Panc1 (cell line): ENCODE measurements at regions of chr6 and their contacts with region 1.

Region 1: DNA sequence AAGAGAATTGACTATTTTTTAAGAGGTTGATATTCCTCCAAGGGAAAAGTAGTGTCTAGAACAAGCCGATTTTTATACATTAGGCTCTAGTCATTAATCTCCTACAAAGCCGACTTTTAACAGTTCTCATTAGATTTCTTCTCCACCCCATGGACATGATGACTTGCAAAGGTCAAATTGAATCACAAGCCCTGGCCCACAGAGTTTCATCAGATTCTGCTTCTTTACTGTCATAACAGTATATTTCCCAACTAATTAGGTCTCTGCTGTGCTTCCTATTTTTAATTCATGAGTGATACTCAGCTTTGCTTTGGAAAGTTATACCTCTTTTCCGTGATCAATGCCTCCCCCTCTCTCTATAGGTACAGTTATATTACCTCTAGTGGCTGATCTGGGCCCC is 90.6 kb upstream of the ADGRB3 start:
- DNase-seq: no peak
- ATAC-seq: no peak
- H3K4me3 ChIP-seq: no peak overlapping the region
- H3K27ac ChIP-seq: no peak overlapping the region
- H3K4me1 ChIP-seq: no peaks in the 10 kb centered on the region
- H3K27me3 ChIP-seq: no peaks in the 10 kb centered on the region
- CTCF ChIP-seq: no peak

Region 2: DNA sequence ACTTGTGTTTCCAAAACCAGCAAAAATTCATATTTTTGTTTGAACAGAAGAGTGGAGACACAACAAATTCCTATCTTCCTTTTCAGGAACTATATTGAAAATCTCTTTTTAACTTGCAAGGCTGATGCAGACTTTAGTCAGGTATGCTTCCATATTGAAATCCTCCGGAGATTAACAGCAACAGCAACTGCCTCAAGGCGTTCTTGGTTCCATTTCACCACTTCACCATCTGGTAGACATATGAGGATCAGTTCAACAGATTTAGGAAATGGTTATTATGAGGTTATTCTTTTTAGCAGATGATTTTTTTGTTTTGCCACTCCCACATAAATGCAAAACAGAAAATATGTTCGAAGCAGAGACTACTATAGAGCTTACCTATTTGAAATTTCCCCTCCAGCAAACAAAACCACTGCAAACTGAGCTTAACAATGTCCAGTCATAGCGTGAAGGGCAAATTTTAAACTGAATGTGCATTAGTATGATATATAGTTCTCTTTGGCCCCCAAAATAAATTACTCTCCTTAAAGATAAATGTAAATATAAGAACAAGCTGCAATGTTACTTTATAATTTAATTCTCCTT is 429.9 kb before region 1 on chr6:
- CTCF ChIA-PET with region 1: no interaction called
- POLR2A ChIA-PET with region 1: interaction called, 11 read pairs
- in situ Hi-C with region 1: no loop called
- intact Hi-C with region 1: no loop called
- DNase-seq: no peak
- ATAC-seq: no peak
- H3K4me3 ChIP-seq: no peak overlapping the region
- H3K27ac ChIP-seq: no peak overlapping the region
- H3K4me1 ChIP-seq: no peaks in the 10 kb centered on the region
- H3K27me3 ChIP-seq: no peaks in the 10 kb centered on the region
- CTCF ChIP-seq: no peak

Region 3: DNA sequence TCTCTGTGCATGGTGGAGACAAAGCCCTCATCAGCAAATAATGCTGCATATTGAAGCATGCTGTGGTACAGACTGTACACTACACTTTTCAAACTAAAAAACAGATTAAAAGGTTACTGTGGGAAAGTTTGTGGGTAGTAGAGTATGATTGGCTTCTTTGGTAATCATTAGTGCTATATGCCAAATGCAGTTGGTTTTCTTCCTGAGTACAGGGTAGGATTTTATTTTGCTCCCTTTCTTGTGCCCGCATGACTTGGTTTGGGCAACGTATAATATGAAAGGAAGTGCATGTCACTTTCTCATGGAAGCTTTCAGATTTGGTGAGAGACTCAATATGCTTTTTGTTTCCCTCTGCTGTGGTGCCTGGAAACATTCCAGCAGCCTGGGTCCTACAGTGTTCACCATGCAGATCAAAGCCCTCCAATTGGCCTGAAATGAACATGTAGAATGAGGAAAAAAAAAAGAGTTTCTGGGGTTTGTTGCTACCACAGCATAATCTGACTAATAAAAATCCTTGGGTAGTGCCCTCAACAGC is 180.1 kb before region 1 on chr6:
- CTCF ChIA-PET with region 1: no interaction called
- POLR2A ChIA-PET with region 1: no interaction called
- in situ Hi-C with region 1: no loop called
- intact Hi-C with region 1: no loop called
- DNase-seq: no peak
- ATAC-seq: no peak
- H3K4me3 ChIP-seq: no peak overlapping the region
- H3K27ac ChIP-seq: no peak overlapping the region
- H3K4me1 ChIP-seq: no peaks in the 10 kb centered on the region
- H3K27me3 ChIP-seq: no peaks in the 10 kb centered on the region
- CTCF ChIP-seq: no peak

Region 4: GRCh38 chr6:68476611-68477010 is 67.8 kb before region 1 on chr6:
- CTCF ChIA-PET with region 1: no interaction called
- POLR2A ChIA-PET with region 1: no interaction called
- in situ Hi-C with region 1: no loop called
- intact Hi-C with region 1: no loop called
- DNase-seq: no peak
- ATAC-seq: no peak
- H3K4me3 ChIP-seq: no peak overlapping the region
- H3K27ac ChIP-seq: no peak overlapping the region
- H3K4me1 ChIP-seq: no peaks in the 10 kb centered on the region
- H3K27me3 ChIP-seq: no peaks in the 10 kb centered on the region
- CTCF ChIP-seq: no peak

Region 5: DNA sequence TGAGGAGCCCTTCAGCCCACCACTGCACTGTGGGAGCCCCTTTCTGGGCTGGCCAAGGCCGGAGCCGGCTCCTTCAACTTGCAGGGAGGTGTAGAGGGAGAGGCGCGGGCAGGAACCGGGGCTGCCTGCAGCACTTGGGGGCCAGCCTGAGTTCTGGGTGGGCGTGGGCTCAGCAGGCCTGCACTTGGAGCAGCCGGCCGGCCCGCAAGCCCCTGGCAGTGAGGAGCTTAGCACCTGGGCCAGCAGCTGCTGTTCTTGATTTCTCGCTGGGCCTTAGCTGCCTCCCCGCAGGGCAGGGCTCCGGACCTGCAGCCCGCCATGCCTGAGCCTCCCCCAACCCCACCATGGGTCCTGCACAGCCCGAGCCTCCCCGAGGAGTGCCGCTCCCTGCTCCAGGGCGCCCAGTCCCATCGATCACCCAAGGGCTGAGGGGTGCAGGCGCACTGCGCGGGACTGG is 11.1 kb before region 1 on chr6:
- CTCF ChIA-PET with region 1: no interaction called
- POLR2A ChIA-PET with region 1: no interaction called
- in situ Hi-C with region 1: no loop called
- intact Hi-C with region 1: no loop called
- DNase-seq: no peak
- ATAC-seq: no peak
- H3K4me3 ChIP-seq: no peak overlapping the region
- H3K27ac ChIP-seq: no peak overlapping the region
- H3K4me1 ChIP-seq: no peaks in the 10 kb centered on the region
- H3K27me3 ChIP-seq: no peaks in the 10 kb centered on the region
- CTCF ChIP-seq: no peak

Region 6: DNA sequence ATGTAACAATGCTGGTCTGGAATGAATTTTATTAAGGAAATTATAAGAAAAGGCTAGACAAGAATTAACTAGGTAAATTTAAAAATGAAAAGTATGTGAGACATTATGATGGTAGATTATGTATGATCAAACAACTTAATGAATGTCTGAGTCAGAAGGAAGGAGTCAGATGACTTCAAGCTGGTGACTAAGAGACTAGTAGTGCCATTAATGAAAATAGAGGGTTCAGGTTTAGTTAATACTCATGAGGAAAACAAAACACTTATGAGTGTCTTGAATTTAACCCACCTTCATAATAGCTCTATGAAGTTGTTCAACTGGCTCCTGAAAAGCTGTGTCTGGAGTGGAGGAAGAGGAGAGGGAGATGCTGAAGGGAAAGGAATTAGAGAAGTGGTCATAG is 347.0 kb after region 1 on chr6:
- CTCF ChIA-PET with region 1: no interaction called
- POLR2A ChIA-PET with region 1: no interaction called
- in situ Hi-C with region 1: no loop called
- intact Hi-C with region 1: no loop called
- DNase-seq: no peak
- ATAC-seq: no peak
- H3K4me3 ChIP-seq: no peak overlapping the region
- H3K27ac ChIP-seq: no peak overlapping the region
- H3K4me1 ChIP-seq: no peaks in the 10 kb centered on the region
- H3K27me3 ChIP-seq: no peaks in the 10 kb centered on the region
- CTCF ChIP-seq: no peak